ENCODE measurements at regions of chr5 and their contacts with region 1.

Region 1: DNA sequence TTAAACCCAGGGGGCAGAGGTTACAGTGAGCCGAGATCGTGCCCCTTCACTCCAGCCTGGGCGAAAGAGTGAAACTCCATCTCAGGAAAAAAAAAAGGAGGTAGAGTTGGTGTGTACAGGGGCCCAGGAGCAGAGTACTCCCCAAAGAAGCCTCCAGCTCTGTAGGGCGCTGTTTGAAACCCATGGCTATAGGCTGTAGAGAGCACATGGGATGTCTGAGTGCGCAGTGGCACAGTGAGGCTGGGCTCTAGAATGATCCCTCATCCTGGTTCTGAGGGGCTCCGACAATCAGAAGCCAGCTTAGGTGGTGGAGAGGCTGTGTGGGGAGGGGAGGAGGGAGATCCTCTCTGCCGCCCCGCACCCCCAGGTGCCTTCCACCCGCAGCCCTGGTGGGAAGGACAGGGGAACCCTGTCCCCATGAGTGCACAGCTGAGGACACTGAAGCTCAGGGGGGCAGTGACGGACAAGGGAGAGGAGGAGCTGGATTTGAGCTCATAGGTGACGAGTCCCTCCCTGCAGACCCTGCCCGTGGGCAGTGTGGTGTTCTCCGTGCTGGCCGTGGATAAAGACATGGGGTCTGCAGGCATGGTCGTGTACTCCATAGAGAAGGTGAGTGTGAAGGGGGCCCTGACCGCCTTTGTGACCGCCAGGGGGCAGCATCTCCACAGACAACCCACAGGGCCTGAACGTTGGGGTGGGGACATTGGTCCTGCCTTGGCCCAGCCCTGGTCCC is 24.6 kb downstream of the CDHR2 start:
- DNase-seq: peak; percentile 73
- H3K4me3 ChIP-seq: no peak overlapping the region
- H3K27ac ChIP-seq: no peak overlapping the region
- H3K4me1 ChIP-seq: no peaks in the 10 kb centered on the region
- H3K27me3 ChIP-seq: peaks cover 7% of the 10 kb centered on the region
- CTCF ChIP-seq: peak; percentile 63 to 82 (median 77)
- EP300 ChIP-seq: no peak
- POLR2A ChIP-seq: no peak

Region 2: GRCh38 chr5:176415952-176416924 is 157.5 kb before region 1 on chr5 and contains the start of gene CLTB:
- in situ Hi-C with region 1: loop called in 2 of 4 experiments (anchors 10 to 25 kb)
- intact Hi-C with region 1: no loop called
- DNase-seq: peak; percentile 95
- H3K4me3 ChIP-seq: peak within 1 kb of the TSS; percentile 80 to 98 (median 88)
- H3K27ac ChIP-seq: peak within 1 kb of the TSS; percentile 93 to 97 (median 94)
- H3K4me1 ChIP-seq: peaks cover 8 to 51% (median 40%) of the 10 kb centered on the region in 4 donors
- H3K27me3 ChIP-seq: no peaks in the 10 kb centered on the region
- CTCF ChIP-seq: peak; percentile 41 to 78 (median 61)
- EP300 ChIP-seq: no peak
- POLR2A ChIP-seq: peak; percentile 42
- total RNA-seq, gene CLTB: 167 to 272 (median 265) TPM

Region 3: GRCh38 chr5:176537608-176538504 is 35.9 kb before region 1 on chr5:
- in situ Hi-C with region 1: no loop called
- intact Hi-C with region 1: no loop called
- DNase-seq: peak; percentile 99
- H3K4me3 ChIP-seq: peak overlapping the region; percentile 45 to 93 (median 90)
- H3K27ac ChIP-seq: peak overlapping the region; percentile 89 to 99 (median 98)
- H3K4me1 ChIP-seq: peaks cover 32 to 57% (median 51%) of the 10 kb centered on the region in 4 donors
- H3K27me3 ChIP-seq: no peaks in the 10 kb centered on the region
- CTCF ChIP-seq: peak in 1 of 5 experiments; percentile 13
- EP300 ChIP-seq: no peak
- POLR2A ChIP-seq: peak; percentile 79

Measured in transverse colon (tissue), 4 donors.